ENCODE measurements at regions of chr4 and their contacts with region 1.

Region 1: GRCh38 chr4:118280501-118281218 is 72.1 kb downstream of the PRSS12 start:
- DNase-seq: peak in 1 of 3 donors; percentile 69
- ATAC-seq: peak; percentile 50
- H3K4me3 ChIP-seq: no peak overlapping the region
- H3K4me1 ChIP-seq: peaks cover 23% of the 10 kb centered on the region
- CTCF ChIP-seq: peak; percentile 8

Region 2: DNA sequence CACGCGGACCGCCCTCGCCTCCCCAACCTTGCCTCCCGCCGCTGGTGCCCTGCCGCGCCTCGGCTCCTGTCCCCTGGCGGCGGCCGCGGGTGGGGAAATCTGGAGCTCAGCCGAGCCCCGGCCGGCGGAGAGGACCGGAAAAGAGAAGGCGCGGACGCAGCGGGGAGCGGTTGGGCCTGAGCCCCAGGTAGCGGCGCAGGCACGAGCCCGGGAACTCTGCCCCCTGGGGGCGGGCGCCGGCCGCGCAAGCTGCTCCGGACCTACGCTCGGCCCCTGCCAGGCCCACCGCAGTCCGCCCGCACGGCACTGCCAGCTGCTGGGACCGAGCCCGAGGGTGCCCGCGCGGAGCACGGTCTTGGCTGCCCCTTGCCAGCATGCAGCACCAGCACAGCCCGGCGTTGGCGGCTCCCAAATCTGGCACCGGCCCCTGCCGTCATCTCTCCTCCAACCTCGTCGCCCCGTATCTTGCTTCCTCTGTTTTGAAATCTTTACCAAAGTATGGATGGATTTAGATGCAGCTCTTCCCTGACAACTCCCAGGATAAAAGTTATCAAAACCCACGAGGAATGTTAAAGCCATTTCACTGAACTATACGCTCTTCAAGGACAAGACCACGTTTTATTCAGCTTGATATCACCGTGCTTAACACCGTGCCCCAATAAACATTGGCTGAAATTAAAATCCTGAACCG is 72.3 kb after region 1 on chr4 and contains the start of gene PRSS12:
- intact Hi-C with region 1: loop called in 1 of 2 experiments (anchors 5 kb)
- DNase-seq: peak; percentile 84 to 90 (median 86)
- ATAC-seq: peak; percentile 88
- H3K4me3 ChIP-seq: peak within 1 kb of the TSS; percentile 22
- H3K4me1 ChIP-seq: peaks cover 7% of the 10 kb centered on the region
- CTCF ChIP-seq: peak; percentile 86
- total RNA-seq, gene PRSS12: 12.9 to 41.7 (median 31.1) TPM

Measured in mucosa of descending colon (tissue), 3 donors.